Endothelial cell of umbilical vein (primary cell): ENCODE measurements at regions of chr5 and their contacts with region 1.

Region 1: GRCh38 chr5:36073595-36074216 is 7.0 kb upstream of the UGT3A2 start:
- DNase-seq: no peak
- H3K4me3 ChIP-seq: no peak overlapping the region
- H3K27ac ChIP-seq: no peak overlapping the region
- H3K4me1 ChIP-seq: no peaks in the 10 kb centered on the region
- H3K27me3 ChIP-seq: peaks cover 0 to 7% of the 10 kb centered on the region in 2 experiments
- CTCF ChIP-seq: no peak
- POLR2A ChIP-seq: no peak

Region 2: DNA sequence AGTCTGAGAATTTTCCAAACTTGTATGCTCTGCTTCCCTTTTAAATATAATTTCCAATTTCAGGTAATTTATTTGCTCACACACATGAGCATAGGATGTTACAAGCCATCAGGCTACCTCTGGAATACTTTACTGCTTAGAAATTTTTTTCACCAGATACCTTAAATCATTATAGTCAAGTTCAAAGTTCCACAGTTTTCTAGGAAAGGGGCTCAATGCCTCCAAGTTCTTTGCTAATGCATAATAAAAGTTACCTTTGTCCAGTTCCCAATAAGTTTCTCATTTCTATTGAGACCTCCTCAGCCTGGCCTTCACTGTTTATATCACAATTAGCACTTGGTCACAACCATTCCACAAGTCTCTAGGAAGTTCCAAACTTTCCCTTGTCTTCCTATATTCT is 66.3 kb before region 1 on chr5:
- CTCF ChIA-PET with region 1: no interaction called
- POLR2A ChIA-PET with region 1: no interaction called
- dilution Hi-C with region 1: no loop called
- intact Hi-C with region 1: no loop called
- DNase-seq: no peak
- H3K4me3 ChIP-seq: no peak overlapping the region
- H3K27ac ChIP-seq: no peak overlapping the region
- H3K4me1 ChIP-seq: no peaks in the 10 kb centered on the region
- H3K27me3 ChIP-seq: no peaks in the 10 kb centered on the region
- CTCF ChIP-seq: no peak
- POLR2A ChIP-seq: no peak

Region 3: DNA sequence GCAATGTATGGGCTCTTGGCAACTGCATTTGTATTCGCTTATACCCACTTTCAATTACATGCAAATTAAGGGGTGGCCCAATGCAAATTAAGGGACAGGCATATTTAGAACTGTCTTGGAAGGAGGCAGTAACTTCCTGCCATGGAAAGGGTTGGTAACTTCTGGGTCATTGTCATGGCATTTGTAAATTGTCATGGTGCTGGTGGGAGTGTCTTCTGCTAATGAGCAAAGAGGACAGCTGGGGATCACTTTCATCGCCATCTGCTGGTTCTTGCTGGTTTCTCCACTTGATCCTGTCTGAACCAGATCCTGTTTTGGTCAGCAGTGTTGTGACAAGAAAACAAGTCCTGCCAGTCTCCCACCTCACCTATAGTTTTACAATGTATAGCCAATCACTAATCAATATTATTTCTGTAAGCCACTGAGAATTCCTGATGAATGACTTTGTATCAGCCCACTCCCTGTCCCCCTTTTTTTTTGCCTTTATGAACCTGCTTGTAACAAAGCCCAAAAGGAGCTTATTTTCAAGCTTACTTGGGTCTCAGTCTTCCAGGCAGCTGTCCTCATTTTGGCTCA is 16.4 kb after region 1 on chr5:
- CTCF ChIA-PET with region 1: interaction called, 83 read pairs
- POLR2A ChIA-PET with region 1: no interaction called
- dilution Hi-C with region 1: no loop called
- intact Hi-C with region 1: no loop called
- DNase-seq: peak; percentile 49
- H3K4me3 ChIP-seq: no peak overlapping the region
- H3K27ac ChIP-seq: no peak overlapping the region
- H3K4me1 ChIP-seq: no peaks in the 10 kb centered on the region
- H3K27me3 ChIP-seq: peaks cover 2% of the 10 kb centered on the region in 2 experiments
- CTCF ChIP-seq: peak; percentile 27 to 58
- POLR2A ChIP-seq: no peak

Region 4: GRCh38 chr5:36323926-36324781 is 250.4 kb after region 1 on chr5:
- CTCF ChIA-PET with region 1: no interaction called
- POLR2A ChIA-PET with region 1: no interaction called
- dilution Hi-C with region 1: no loop called
- intact Hi-C with region 1: no loop called
- DNase-seq: no peak
- H3K4me3 ChIP-seq: no peak overlapping the region
- H3K27ac ChIP-seq: no peak overlapping the region
- H3K4me1 ChIP-seq: no peaks in the 10 kb centered on the region
- H3K27me3 ChIP-seq: no peaks in the 10 kb centered on the region
- CTCF ChIP-seq: no peak
- POLR2A ChIP-seq: no peak